CD14-positive monocyte (primary cell): ENCODE measurements at regions of chr1 and their contacts with region 1.

Region 1: GRCh38 chr1:109050266-109050995 is 8.5 kb upstream of the WDR47 start:
- DNase-seq: no peak
- H3K4me3 ChIP-seq: no peak overlapping the region
- H3K4me3 Mint-ChIP-seq: no peak overlapping the region
- H3K27ac ChIP-seq: no peak overlapping the region
- H3K27ac Mint-ChIP-seq: no peak overlapping the region
- H3K4me1 ChIP-seq: no peaks in the 10 kb centered on the region
- H3K4me1 Mint-ChIP-seq: peaks cover 2% of the 10 kb centered on the region
- H3K27me3 ChIP-seq: peaks cover 0 to 2% of the 10 kb centered on the region in 2 donors
- H3K27me3 Mint-ChIP-seq: peaks cover 5 to 20% (median 13%) of the 10 kb centered on the region in 3 donors
- CTCF ChIP-seq: no peak

Region 2: DNA sequence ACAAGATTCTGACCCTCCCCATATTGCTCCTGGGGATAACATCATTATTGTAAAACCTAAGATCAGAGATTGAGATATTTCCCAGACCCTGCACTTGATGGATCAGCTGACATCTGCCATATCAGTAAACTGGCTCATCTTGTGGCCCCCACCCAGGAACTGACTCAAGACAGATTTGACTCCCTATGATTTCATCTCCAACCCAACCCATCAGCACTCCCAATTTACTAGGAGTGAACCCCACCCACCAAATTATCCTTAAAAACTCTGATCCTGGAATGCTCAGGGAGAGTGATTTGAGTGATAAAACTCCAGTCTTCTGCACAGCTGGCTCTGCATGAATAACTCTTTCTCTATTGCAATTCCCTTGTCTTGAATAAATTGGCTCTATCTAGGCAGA is 81.1 kb before region 1 on chr1:
- intact Hi-C with region 1: loop called in 1 of 2 experiments (anchors 5 kb)
- DNase-seq: no peak
- H3K4me3 ChIP-seq: no peak overlapping the region
- H3K4me3 Mint-ChIP-seq: no peak overlapping the region
- H3K27ac ChIP-seq: no peak overlapping the region
- H3K27ac Mint-ChIP-seq: no peak overlapping the region
- H3K4me1 ChIP-seq: peaks cover 0 to under 1% of the 10 kb centered on the region in 2 donors
- H3K4me1 Mint-ChIP-seq: no peaks in the 10 kb centered on the region
- H3K27me3 ChIP-seq: no peaks in the 10 kb centered on the region
- H3K27me3 Mint-ChIP-seq: no peaks in the 10 kb centered on the region
- CTCF ChIP-seq: no peak

Region 3: DNA sequence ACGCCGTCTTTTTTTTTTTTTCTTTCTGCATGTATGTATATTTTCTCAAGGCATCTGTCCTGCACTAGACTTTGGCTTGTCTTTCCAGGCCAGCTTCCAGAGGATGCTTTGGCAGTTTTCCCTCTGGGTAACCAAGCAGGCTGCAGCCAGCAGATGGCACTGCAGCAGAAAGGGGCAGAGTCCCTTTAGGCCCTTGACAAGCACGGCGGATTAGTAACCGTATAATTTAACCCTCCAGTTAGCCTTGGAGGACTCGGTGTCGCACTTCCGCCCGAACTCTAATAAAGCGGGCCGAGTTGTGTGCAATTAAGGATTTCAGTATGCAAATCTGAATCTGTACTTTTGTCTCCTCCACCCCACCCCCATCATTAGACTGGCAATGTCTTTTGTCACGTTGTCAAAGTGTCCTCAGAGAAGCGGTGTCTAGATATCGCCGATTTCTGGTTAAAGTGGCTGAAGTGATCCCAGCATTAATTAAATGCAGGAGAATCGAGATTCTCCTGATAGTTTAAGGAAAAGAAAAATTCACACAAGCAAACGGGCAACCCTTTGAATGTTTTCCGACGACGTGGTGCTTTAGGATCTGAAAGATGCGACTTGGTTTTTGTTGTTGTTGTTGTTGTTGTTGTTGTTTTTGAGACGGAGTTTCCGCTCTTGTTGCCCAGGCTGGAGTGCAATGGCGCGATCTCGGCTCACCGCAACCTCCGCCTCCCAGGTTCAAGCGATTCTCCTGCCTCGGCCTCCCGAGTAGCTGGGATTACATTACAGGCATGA is 39.0 kb after region 1 on chr1:
- intact Hi-C with region 1: no loop called
- DNase-seq: peak in 2 of 3 donors; percentile 27 to 51
- H3K4me3 ChIP-seq: peak overlapping the region; percentile 14 to 97 (median 81)
- H3K4me3 Mint-ChIP-seq: peak overlapping the region; percentile 86 to 98
- H3K27ac ChIP-seq: peak overlapping the region; percentile 96 to 98
- H3K27ac Mint-ChIP-seq: peak overlapping the region; percentile 98 to 99 (median 99)
- H3K4me1 ChIP-seq: peaks cover 35 to 44% of the 10 kb centered on the region in 2 donors
- H3K4me1 Mint-ChIP-seq: peaks cover 40% of the 10 kb centered on the region
- H3K27me3 ChIP-seq: no peaks in the 10 kb centered on the region
- H3K27me3 Mint-ChIP-seq: peaks cover 0 to 2% (median 0%) of the 10 kb centered on the region in 3 donors
- CTCF ChIP-seq: peak; percentile 50